T-cell (primary cell): ENCODE measurements at regions of chr10 and their contacts with region 1.

Region 1: DNA sequence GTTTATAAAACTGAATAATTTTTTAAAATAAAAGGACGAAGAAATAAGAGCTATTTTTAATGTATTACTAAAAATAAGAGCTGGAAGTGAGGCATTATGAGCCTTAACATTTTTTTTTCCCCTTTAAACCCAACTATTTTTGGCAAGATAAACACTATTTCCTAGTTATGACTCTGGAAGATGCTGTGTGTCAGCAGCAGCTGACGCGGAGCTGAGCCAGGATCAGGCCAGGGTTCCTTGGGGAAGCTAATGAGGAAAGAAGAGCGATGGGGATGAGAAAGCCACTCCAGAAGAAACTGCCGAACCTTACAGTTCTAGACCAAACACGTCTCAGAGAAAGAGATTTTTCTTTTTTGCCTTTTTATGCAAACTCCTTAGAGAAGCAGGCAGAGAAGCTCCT is 85.9 kb downstream of the USP6NL start:
- DNase-seq: no peak
- ATAC-seq: no peak
- H3K4me3 ChIP-seq: no peak overlapping the region
- H3K4me3 Mint-ChIP-seq: no peak overlapping the region
- H3K27ac ChIP-seq: no peak overlapping the region
- H3K27ac Mint-ChIP-seq: no peak overlapping the region
- H3K4me1 ChIP-seq: no peaks in the 10 kb centered on the region
- H3K4me1 Mint-ChIP-seq: peaks cover 14 to 24% (median 16%) of the 10 kb centered on the region in 3 donors
- H3K27me3 ChIP-seq: no peaks in the 10 kb centered on the region
- H3K27me3 Mint-ChIP-seq: no peaks in the 10 kb centered on the region

Region 2: GRCh38 chr10:11553773-11554381 is 28.4 kb after region 1 on chr10:
- CTCF ChIA-PET with region 1: interaction called in 1 of 2 experiments, 10 read pairs
- POLR2A ChIA-PET with region 1: no interaction called
- DNase-seq: no peak
- ATAC-seq: no peak
- H3K4me3 ChIP-seq: no peak overlapping the region
- H3K4me3 Mint-ChIP-seq: peak overlapping the region in 1 of 3 donors; percentile 15
- H3K27ac ChIP-seq: no peak overlapping the region
- H3K27ac Mint-ChIP-seq: no peak overlapping the region
- H3K4me1 ChIP-seq: no peaks in the 10 kb centered on the region
- H3K4me1 Mint-ChIP-seq: peaks cover 11 to 31% (median 27%) of the 10 kb centered on the region in 3 donors
- H3K27me3 ChIP-seq: no peaks in the 10 kb centered on the region
- H3K27me3 Mint-ChIP-seq: peaks cover 0 to 3% of the 10 kb centered on the region in 2 donors